HEK293 (cell line): ENCODE measurements at regions of chr5 and their contacts with region 1.

Region 1: DNA sequence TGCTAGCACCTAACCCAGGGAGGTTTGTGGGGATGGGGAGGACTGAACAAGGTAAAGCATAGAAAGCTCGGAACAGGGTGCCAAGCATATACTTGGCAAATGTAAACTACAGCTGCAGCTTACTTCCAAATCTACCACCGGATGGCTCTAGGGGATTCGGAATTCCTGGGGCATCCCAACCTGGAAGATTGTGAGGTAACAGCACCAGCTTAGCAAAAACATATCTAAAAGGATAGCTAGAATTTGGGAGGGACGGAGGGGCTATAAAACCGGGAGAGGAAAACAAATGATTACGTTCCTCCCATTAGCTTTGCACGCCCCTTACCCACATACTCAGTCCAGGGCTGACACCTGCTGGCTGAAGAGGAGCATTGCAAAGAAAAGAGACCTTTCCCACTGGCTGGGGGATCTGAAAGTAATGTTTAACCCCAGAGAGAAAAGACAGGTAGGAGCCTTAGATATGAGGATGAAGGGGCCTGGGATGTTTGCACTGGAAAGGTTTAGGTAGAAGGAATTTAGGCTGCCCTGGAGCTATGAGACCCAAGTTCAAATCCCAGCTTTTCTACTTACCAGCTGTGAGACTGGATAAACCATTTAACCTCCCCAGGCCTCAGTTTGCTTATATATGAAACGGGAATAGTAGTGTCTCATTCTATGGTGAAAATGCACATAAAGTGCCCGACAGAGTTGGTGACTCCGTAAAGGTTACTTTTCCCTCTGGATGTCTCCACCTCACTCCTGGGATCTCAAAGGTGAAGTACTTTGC is 73.6 kb downstream of the FAM114A2 start:
- H3K4me3 ChIP-seq: no peak overlapping the region
- H3K27ac ChIP-seq: no peak overlapping the region
- H3K4me1 ChIP-seq: no peaks in the 10 kb centered on the region
- CTCF ChIP-seq: peak; percentile 83

Region 2: DNA sequence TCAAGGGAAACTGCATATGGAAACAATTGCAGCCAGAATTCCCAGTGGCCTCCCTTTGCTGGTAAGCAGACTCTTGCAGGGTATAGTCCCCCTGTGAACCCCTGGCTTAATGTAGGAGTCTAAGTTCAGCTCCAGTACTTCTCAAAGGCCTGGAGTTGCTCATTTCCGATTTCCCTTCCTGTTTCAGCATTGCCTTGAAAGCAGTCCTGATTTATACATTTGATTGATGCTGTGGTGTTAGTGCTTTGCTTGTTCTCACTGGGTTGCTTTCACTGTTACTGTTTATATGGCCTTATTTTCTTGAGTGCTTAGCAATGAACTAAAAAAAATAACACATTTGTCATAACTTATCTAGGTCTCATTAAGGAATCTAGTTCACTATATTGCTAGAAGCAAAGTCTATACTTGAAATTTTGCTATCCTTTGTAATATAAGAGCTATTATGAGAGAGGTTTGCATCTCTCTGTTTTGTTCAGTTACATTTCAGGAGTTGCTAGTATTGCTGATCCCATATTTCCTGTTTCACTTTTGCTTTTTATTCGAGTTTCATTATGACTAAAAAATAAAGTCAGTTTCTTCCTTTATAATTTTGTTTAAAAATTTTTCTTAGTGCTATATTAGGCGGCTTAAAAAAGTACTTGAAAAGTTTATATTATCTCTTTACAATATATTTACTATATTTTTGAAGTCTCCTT is 1437.6 kb before region 1 on chr5:
- CTCF ChIA-PET with region 1: interaction called, 25 read pairs
- POLR2A ChIA-PET with region 1: no interaction called
- H3K4me3 ChIP-seq: no peak overlapping the region
- H3K27ac ChIP-seq: no peak overlapping the region
- H3K4me1 ChIP-seq: no peaks in the 10 kb centered on the region
- CTCF ChIP-seq: no peak

Region 3: GRCh38 chr5:152532714-152533113 is 1432.3 kb before region 1 on chr5:
- CTCF ChIA-PET with region 1: interaction called, 25 read pairs
- POLR2A ChIA-PET with region 1: no interaction called
- H3K4me3 ChIP-seq: no peak overlapping the region
- H3K27ac ChIP-seq: no peak overlapping the region
- H3K4me1 ChIP-seq: no peaks in the 10 kb centered on the region
- CTCF ChIP-seq: peak; percentile 34; the same call in 1 of the 2 replicates

Region 4: DNA sequence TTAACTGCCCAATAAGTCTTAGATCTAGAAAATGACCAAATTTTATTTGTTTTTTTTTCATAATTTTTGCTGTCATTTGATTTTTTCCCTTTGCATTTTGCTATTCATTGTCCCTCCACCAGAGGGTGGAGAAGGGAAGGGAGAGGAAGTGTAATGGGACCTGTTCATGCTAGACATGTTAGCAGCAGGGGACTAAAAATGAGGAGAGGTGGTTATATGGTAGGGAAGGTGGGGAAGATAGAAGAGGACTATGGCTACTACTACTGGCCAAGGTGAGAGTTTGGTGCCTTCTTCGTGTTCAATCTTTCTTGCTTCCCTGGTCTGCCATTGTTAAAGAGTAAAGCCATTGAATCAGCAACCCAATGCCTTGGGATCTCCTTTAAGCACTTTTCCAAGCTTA is 468.2 kb before region 1 on chr5:
- CTCF ChIA-PET with region 1: interaction called, 47 read pairs
- POLR2A ChIA-PET with region 1: no interaction called
- H3K4me3 ChIP-seq: no peak overlapping the region
- H3K27ac ChIP-seq: no peak overlapping the region
- H3K4me1 ChIP-seq: no peaks in the 10 kb centered on the region
- CTCF ChIP-seq: no peak

Region 5: GRCh38 chr5:153952893-153953292 is 12.2 kb before region 1 on chr5:
- CTCF ChIA-PET with region 1: interaction called, 10 read pairs
- POLR2A ChIA-PET with region 1: no interaction called
- H3K4me3 ChIP-seq: no peak overlapping the region
- H3K27ac ChIP-seq: no peak overlapping the region
- H3K4me1 ChIP-seq: no peaks in the 10 kb centered on the region
- CTCF ChIP-seq: no peak

Region 6: DNA sequence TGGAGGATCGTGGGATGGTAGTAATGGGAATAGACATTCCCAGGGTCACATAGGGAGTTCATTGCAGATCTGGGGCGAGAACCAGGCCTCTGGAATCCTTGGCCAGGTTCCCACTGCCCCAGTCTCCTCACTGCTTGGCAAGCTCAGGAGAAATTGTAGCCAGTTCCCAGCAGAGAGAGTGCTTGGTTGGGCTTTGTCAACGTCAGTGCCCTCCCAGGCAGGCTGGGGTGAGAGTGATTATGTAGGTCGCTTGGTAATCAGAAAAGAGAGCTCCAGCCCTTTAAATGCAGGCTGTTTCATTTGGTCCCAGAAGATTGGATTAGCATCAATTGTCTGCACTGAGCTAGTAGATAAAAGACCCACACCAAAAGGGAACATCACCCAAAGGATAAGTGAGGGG is 173.6 kb after region 1 on chr5:
- CTCF ChIA-PET with region 1: no interaction called
- POLR2A ChIA-PET with region 1: no interaction called
- H3K4me3 ChIP-seq: no peak overlapping the region
- H3K27ac ChIP-seq: no peak overlapping the region
- H3K4me1 ChIP-seq: peaks cover 15% of the 10 kb centered on the region
- CTCF ChIP-seq: no peak

Region 7: DNA sequence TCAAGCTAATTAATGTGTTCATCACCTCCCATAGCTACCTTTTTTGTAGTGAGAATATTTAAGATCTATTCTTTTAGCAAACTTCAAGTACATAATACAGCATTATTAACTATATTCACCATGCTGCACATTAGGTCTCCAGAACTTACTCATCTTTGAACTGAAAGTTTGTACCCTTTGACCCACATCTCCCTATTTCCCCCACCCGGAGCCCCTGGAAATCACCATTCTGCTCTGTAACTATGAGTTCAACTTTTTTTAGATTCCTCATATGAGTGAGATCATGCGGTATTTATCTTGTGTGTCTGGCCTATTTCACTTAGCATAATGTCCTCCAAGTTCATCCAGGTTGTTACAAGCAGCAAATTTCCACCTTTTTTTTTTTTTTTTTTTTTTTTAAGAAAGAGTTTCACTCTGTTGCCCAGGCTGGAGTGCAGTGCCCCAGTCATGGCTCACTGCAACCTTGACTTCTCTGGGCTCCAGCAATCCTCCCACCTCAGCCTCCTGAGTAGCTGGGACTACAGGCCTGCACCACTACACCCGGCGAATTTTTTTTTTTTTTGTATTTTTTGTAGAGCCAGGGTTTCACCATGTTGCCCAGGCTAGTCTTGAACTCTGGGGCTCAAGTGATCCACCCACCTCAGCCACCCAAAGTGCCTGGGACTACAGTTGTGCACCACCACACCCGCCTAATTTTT is 380.3 kb after region 1 on chr5:
- CTCF ChIA-PET with region 1: no interaction called
- POLR2A ChIA-PET with region 1: no interaction called
- H3K4me3 ChIP-seq: no peak overlapping the region
- H3K27ac ChIP-seq: no peak overlapping the region
- H3K4me1 ChIP-seq: no peaks in the 10 kb centered on the region
- CTCF ChIP-seq: no peak